Activated CD8-positive, alpha-beta memory T cell treated with anti-CD3 and anti-CD28 coated beads, Interleukin-2, amount 10 ng/mL, durations not matched to agents 7 days and 5 days (primary cell): ENCODE measurements at regions of chr2 and their contacts with region 1.

Region 1: DNA sequence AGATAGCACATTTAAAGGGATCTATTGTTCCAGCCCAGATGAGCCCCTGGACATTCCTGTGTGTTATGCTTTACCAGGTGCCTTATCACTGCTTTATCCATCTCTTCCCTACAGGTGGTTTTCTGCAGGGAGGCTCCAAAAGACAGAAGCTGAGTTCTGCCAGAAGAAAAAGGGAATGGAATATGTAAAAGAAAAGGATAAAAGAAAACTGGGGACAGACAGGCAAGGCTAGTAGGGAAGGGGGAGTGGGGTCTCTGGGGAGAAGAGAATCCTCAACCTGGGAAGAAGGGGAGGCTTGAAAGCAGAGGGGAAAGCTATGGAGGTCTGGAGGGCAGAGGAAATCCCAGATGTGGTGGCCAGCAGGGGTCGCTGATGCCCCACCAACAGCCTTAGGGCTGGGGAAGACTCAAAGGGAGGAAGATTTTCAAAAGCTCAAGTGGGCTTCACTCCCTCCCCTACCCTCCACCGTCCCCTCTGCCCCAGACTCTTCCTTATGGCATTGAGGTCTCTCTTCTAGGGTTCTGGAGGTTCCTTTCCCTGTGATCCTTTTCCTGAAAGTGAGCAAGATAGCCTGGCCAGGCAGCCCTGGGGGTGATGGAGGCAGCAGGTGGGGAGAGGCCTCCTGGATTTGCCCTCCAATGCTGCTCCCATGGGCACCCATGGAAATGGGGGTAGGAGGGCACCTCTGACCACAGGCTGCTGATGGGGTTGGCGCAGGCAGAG is 178.1 kb upstream of the PKDCC start:
- DNase-seq: peak; percentile 71
- ATAC-seq: peak; percentile 74
- H3K4me3 Mint-ChIP-seq: no peak overlapping the region
- H3K27ac Mint-ChIP-seq: no peak overlapping the region
- H3K4me1 Mint-ChIP-seq: peaks cover 15% of the 10 kb centered on the region
- H3K27me3 Mint-ChIP-seq: peaks cover 38% of the 10 kb centered on the region

Region 2: GRCh38 chr2:41720331-41720730 is 149.4 kb before region 1 on chr2:
- CTCF ChIA-PET with region 1: no interaction called
- DNase-seq: no peak
- ATAC-seq: peak; percentile 59
- H3K4me3 Mint-ChIP-seq: no peak overlapping the region
- H3K27ac Mint-ChIP-seq: peak overlapping the region; percentile 30
- H3K4me1 Mint-ChIP-seq: peaks cover 21% of the 10 kb centered on the region
- H3K27me3 Mint-ChIP-seq: no peaks in the 10 kb centered on the region

Region 3: DNA sequence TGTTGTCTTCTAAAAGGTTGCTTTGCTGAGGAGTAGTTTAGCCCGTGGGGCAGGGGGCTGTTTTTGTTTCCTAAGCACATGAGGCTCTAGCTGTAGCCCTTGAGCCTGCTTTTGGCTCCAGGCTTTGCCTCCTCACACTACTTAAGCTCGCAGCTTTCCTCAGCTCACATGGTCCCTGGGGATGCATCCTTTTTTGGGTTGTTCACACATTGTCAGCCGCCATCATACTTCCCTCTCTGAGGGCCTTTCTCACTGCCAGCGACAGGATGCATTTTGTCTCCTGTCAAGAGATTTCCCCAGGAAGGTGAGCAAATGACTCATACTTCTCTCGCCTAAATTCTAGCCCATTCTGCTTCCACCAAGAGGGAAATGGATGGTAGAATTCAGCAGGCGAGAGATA is 101.4 kb before region 1 on chr2:
- CTCF ChIA-PET with region 1: no interaction called
- DNase-seq: no peak
- ATAC-seq: no peak
- H3K4me3 Mint-ChIP-seq: no peak overlapping the region
- H3K27ac Mint-ChIP-seq: no peak overlapping the region
- H3K4me1 Mint-ChIP-seq: no peaks in the 10 kb centered on the region
- H3K27me3 Mint-ChIP-seq: peaks cover 10% of the 10 kb centered on the region

Region 4: GRCh38 chr2:41829011-41829500 is 40.6 kb before region 1 on chr2:
- CTCF ChIA-PET with region 1: no interaction called
- DNase-seq: no peak
- ATAC-seq: no peak
- H3K4me3 Mint-ChIP-seq: no peak overlapping the region
- H3K27ac Mint-ChIP-seq: no peak overlapping the region
- H3K4me1 Mint-ChIP-seq: no peaks in the 10 kb centered on the region
- H3K27me3 Mint-ChIP-seq: peaks cover 28% of the 10 kb centered on the region

Region 5: GRCh38 chr2:41840702-41841551 is 28.8 kb before region 1 on chr2:
- CTCF ChIA-PET with region 1: interaction called, 14 read pairs
- DNase-seq: peak; percentile 98
- ATAC-seq: peak; percentile 100
- H3K4me3 Mint-ChIP-seq: peak overlapping the region; percentile 80
- H3K27ac Mint-ChIP-seq: peak overlapping the region; percentile 86
- H3K4me1 Mint-ChIP-seq: peaks cover 10% of the 10 kb centered on the region
- H3K27me3 Mint-ChIP-seq: peaks cover 36% of the 10 kb centered on the region

Region 6: DNA sequence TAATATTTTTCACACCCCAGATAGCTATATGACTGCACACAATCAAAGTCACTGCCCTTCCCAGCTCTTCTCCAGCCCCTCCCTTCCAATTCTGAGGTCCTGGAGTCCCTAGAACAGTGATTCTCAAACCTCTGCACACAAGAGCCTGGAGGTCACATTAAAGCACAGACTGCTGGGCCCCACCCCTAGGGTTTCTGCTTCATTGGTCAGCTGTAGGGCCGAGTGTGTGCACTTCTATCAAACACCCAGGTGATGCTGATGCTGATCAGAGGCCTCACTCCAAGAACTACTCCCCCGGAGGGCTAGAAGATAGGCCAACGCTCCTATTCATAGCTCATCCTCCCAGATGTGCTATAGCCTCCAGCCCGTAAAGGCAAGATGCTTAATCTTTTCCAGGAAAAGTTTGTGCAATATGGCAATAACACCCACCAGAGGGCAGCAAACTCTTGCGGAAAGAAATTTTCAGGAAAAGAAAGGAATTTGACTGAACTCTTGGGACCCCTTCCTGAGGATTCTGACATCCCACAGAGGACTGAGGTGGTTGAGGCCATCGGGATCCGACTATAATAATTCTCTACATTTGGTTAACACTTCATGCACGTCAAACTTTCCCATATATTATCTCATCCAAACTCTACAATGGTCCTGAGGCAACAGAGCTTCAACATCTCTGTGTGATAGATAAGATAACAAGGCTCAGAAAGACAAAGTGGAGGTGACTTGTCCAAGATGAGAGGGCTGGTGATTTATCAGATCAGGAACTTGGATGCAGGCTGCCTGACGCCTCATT is 16.1 kb before region 1 on chr2:
- CTCF ChIA-PET with region 1: interaction called, 31 read pairs
- DNase-seq: no peak
- ATAC-seq: no peak
- H3K4me3 Mint-ChIP-seq: no peak overlapping the region
- H3K27ac Mint-ChIP-seq: no peak overlapping the region
- H3K4me1 Mint-ChIP-seq: no peaks in the 10 kb centered on the region
- H3K27me3 Mint-ChIP-seq: peaks cover 14% of the 10 kb centered on the region

Region 7: GRCh38 chr2:41896186-41896846 is 26.6 kb after region 1 on chr2:
- CTCF ChIA-PET with region 1: interaction called, 13 read pairs
- DNase-seq: peak; percentile 85
- ATAC-seq: peak; percentile 87
- H3K4me3 Mint-ChIP-seq: no peak overlapping the region
- H3K27ac Mint-ChIP-seq: no peak overlapping the region
- H3K4me1 Mint-ChIP-seq: peaks cover 21% of the 10 kb centered on the region
- H3K27me3 Mint-ChIP-seq: peaks cover 78% of the 10 kb centered on the region